Dorsolateral prefrontal cortex (tissue), 120 donors: ENCODE measurements at regions of chr3 and their contacts with region 1.

Region 1: DNA sequence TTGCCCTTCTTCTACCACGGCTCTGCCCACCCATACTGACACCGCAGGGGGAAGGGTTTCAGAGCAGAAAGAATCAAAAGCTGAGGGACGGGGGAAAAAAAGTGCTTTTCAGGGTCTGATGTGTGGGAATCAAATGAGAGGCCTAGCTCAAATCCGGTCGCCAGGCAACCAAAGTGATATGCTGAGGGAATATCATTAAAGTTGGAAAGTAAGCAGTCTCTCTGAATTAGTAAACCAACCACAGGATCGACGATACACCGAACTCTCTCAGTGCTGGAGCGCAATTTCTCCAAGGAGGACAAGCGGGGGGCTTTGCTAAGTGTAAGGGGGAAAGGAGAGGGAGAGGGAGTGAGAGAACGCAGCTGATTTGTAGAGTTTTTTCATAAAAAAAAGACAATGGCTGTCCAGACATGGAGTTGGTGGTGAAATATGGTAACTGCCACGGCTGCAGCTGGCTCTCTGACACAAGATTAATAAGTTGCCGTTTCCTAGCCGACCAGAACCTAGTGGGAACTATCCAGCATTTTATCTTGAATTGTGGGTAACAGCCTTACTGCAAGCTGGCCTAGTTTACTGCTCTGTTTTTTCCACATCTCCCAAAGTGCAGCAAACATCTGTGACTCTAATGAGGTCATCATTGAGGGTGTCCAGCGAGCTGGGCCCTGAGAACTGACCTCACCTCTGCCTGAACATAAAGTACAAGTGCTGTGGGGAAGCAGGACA is 530.2 kb downstream of the SOX2 start:
- DNase-seq: peak in 9 of 10 donors; percentile 26 to 59 (median 49)
- H3K4me3 ChIP-seq: peak overlapping the region in 41 of 59 donors; percentile 4 to 48 (median 25)
- H3K27ac ChIP-seq: peak overlapping the region; percentile 74 to 97 (median 91)
- H3K27me3 ChIP-seq: no peaks in the 10 kb centered on the region
- CTCF ChIP-seq: peak in 8 of 56 donors; percentile 1 to 23 (median 10)

Region 2: DNA sequence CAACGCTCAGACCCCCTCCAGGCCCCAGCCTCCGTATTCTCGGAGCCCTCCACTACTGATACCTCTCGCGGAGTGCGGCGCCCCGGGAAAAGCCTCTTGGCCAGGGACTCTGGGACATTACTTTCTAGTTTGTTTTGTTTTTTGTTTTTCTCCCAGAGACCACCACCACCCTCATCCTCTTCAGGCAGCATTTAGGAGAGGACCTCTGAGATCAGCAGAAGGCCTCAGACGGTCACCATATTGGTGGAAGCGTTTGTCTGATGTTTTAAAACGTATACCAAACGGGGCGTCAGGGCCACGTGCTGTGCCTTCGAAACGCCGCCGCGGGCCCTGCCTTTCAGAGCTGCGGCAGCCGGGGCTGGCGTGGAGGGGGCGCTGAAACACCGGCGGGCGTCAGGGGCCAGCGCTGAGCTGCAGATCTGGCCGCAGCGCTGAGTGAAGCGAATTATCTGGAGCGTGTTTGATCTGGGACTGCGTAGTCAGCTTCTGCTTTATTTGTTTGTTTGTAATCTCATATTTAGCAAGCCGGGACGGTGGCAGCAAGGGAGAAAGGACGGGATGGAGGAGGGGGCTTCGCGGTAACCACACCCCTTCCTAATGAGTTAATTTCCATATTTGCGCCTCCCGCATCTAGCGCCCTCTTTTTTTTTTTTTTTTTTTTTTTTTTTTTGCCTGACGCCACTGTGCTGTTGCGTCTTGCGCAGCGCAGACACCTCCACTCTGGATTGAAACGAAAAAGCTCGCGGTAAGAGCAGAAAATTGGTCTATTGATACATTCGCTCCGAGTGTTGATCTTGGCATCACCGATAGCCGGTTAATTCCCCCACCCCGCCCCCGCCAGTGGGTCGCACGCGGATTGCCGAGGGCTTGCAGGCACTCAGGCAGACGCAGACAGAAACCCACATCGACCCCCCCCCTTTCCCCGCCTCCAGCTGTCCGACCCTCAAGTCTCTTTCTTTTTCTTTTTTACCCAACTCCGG is 515.3 kb before region 1 on chr3:
- intact Hi-C with region 1: loop called (anchors 1 to 2 kb)
- DNase-seq: peak in 2 of 10 donors; percentile 34 to 49
- H3K4me3 ChIP-seq: peak overlapping the region; percentile 21 to 86 (median 56)
- H3K27ac ChIP-seq: peak overlapping the region; percentile 66 to 100 (median 93)
- H3K27me3 ChIP-seq: peaks cover 0 to 93% (median 50%) of the 10 kb centered on the region in 45 donors
- CTCF ChIP-seq: peak in 45 of 56 donors; percentile 5 to 71 (median 30)

Region 3: DNA sequence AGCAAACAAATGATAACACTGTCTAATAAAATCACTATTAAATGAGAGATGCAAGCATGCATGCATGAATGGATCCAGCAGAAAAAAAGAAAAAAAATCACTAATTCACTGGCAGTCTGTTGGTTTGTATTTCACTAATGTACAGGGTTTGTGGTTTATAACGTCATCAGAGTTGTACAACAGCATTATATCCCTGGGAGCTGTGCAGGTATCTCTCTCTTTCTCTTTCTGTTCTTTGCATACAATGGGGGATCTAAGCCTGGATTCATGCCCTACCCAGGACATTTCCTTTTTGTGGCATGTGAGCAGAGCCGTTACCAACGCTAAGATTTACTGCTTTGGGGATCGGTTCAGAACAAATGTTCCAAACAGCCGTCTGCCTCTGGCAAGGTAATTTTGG is 300.7 kb before region 1 on chr3:
- intact Hi-C with region 1: loop called in 1 of 2 experiments (anchors 10 kb)
- DNase-seq: no peak
- H3K4me3 ChIP-seq: no peak overlapping the region
- H3K27ac ChIP-seq: no peak overlapping the region
- H3K27me3 ChIP-seq: no peaks in the 10 kb centered on the region
- CTCF ChIP-seq: no peak

Region 4: DNA sequence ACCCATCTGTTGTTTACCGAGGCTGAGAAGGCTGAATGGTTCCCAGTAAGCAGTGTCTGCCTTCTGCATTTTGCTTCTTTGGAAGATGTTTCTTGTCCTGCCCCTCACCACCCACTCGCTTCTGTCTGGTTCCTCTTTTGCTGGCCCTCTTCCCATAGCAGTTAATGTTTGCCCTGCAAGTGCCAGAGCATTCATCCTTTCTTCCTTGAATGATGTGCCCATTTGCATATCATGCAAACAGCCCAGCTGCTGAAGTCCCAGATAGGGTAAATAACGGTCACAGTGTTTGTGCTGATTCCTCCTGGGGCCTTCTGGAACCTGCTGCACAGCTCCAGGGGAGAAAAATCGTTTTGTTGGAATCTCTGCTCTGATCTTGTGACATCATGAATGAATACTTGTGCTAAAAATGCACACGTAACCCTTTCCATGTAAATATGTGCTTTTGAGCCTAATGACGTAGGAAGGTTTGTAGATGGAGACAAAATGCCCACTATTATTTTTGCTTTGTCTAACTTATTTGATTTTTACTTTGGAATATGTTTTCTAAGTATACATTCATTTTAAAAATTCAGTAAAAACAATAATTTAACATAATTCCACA is 149.2 kb before region 1 on chr3:
- intact Hi-C with region 1: loop called in 1 of 2 experiments (anchors 10 kb)
- DNase-seq: peak in 9 of 10 donors; percentile 3 to 62 (median 47)
- H3K4me3 ChIP-seq: peak overlapping the region in 45 of 59 donors; percentile 1 to 54 (median 25)
- H3K27ac ChIP-seq: peak overlapping the region; percentile 13 to 94 (median 82)
- H3K27me3 ChIP-seq: no peaks in the 10 kb centered on the region
- CTCF ChIP-seq: peak in 1 of 56 donors; percentile 18

Region 5: DNA sequence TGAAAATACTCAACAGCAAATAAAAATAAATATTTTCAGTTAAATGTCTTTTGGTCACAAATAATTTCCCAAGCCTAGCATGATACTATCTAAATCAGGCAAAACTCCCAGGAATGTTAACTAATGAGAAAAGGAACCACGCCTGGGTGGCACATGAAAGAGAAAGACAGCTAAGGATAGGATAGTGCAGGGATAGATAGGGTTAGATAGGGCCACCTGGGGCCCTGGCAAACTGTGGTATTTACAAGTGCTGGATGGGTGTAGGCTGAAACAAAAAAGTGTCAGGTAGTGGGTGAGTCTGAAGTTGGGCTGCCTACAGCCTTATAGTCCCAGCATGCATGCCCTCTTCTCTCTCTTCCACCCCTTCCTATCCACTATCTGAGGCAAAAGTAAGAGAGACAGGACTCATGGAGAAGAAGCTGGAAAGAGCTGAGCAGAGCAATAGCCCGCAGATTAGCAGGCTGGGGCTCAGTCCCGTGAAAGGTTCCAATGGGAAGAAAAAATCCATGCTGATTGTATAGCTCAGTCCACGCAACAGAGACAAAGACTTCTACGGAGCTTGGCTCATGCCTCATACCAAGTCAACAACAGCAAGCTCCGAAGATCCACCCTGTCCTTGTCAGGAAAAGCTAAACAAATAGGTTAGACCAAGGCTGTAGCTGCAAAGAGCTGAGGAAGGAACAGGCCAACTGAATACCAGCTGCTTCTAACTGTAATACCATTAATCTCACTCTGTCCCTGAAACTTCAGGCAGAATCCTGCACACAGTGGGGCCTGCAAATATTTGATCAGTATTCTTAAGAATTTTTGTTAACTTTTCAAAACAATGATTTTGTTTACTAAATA is 209.2 kb after region 1 on chr3:
- intact Hi-C with region 1: no loop called
- DNase-seq: no peak
- H3K4me3 ChIP-seq: no peak overlapping the region
- H3K27ac ChIP-seq: no peak overlapping the region
- H3K27me3 ChIP-seq: no peaks in the 10 kb centered on the region
- CTCF ChIP-seq: no peak